ENCODE measurements at regions of chr5 and their contacts with region 1.

Region 1: DNA sequence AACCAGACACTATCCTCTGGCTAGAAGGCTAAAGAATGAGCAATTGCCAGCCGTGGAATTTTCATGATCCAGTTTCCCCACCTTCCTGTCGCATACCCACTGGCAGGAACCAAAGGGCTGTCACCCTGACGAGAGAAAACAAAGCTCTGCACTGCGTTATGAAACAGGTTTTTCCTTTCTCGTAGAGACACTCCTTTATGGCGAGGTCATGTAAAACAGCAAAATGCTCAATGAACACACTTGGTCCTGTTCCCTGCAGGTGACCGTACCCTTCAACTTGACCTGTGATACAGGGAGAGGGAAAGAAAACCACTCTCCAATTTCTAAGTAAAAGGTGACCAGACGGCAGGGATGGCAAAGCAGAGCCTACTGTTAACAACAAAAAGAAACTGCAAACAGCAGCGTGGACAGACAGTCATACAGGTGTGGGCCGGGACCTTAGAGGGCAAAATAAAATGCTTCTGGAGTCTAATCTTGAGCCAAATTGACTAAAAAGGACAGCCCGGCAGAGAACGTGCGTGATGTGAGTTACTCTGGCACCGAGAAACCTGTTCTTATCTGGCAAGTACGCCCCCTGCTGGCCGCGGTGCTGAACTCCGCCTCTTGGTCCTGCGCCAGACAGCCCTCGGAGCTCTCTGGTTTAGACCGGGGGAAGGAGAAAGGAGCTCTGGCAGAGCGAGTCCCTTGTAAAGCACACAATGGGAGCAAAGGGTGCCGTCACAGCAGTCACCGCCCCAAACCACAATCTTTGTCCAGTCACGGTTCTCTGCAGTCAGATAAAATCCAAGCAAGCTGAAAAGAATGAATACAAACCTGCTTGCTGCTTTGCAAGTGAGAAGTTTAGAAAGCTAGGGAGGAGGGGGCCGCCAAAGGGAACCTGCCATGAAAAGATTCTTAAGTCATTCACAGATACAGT is 98.9 kb downstream of the EFNA5 start:
- DNase-seq: no peak
- H3K4me3 ChIP-seq: peak overlapping the region; percentile 51
- CTCF ChIP-seq: peak; percentile 93

Region 2: GRCh38 chr5:107557051-107557658 is 14.7 kb before region 1 on chr5:
- CTCF ChIA-PET with region 1: interaction called, 41 read pairs
- POLR2A ChIA-PET with region 1: no interaction called
- DNase-seq: no peak
- H3K4me3 ChIP-seq: no peak overlapping the region
- CTCF ChIP-seq: no peak

Region 3: DNA sequence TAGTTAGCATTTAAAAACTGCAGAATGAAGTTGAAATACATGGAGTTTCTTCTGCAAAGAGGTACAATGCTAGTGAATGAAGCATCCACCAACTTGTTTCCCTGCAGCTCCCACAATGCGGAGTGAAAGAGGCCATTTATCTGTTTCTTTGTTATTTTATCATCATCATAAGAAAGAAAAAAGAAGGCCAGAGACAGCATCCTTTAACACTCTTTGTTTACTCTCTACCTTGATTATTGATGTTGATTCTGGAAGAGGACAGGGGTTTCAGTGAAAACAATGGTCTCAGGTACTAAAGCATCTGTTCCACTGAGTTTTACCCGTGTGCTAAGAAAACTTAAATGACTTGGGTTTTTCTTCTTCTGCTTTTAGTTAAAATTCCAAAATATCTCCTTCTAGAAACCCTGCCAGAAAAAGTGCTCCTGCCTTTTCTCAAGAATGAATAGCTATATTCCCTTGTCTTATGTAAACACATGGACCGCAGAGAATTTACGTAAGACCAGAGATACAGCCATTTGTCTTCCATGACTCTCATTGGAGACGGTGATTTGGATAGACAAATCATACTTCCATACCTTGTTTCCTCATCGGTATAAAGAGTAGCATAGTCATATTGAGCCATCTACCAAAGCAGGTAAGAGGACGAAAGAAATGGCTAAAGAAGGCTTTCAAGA is 17.8 kb after region 1 on chr5:
- CTCF ChIA-PET with region 1: interaction called, 43 read pairs
- POLR2A ChIA-PET with region 1: no interaction called
- DNase-seq: no peak
- H3K4me3 ChIP-seq: no peak overlapping the region
- CTCF ChIP-seq: no peak

Measured in AG04449 (cell line).